AG04449 (cell line): ENCODE measurements at regions of chr5 and their contacts with region 1.

Region 1: DNA sequence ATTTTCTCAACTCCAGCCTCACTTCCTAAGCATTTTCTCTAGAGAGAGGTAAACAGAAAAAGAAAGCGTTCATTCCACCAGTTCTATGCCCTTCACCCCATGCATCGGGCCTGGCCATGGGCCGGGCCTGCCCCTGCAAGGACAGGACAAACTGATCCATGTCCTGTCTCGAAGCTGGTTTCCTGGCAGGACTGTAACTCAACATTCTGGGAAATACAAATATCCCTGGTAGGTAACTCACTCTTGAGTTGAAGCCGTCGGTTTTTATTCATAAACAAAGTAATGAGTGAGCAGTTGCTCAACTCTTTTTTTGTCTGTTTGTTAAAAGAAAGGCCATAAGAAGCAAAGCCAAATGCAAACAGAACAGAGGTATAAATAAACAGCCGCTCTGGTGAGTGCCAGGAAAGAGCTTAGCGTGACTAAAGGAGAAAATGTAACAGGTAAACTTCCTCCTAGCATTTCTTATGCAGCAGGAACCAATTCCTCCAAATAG is 64.4 kb upstream of the DNAH5 start:
- DNase-seq: no peak
- H3K4me3 ChIP-seq: no peak overlapping the region
- CTCF ChIP-seq: no peak

Region 2: GRCh38 chr5:13987843-13988464 is 20.9 kb before region 1 on chr5:
- CTCF ChIA-PET with region 1: interaction called, 32 read pairs
- POLR2A ChIA-PET with region 1: no interaction called
- DNase-seq: peak; percentile 21
- H3K4me3 ChIP-seq: no peak overlapping the region
- CTCF ChIP-seq: peak; percentile 74

Region 3: GRCh38 chr5:13994621-13995253 is 14.1 kb before region 1 on chr5:
- CTCF ChIA-PET with region 1: interaction called, 32 read pairs
- POLR2A ChIA-PET with region 1: no interaction called
- DNase-seq: no peak
- H3K4me3 ChIP-seq: no peak overlapping the region
- CTCF ChIP-seq: no peak